Heart left ventricle (tissue), 16 donors: ENCODE measurements at regions of chr7 and their contacts with region 1.

Region 1: GRCh38 chr7:24665564-24666294 is 91.5 kb downstream of the GSDME start:
- DNase-seq: no peak
- ATAC-seq: no peak
- H3K4me3 ChIP-seq: no peak overlapping the region
- H3K27ac ChIP-seq: no peak overlapping the region
- H3K4me1 ChIP-seq: peaks cover 0 to 15% (median 0%) of the 10 kb centered on the region in 12 donors
- H3K27me3 ChIP-seq: no peaks in the 10 kb centered on the region
- CTCF ChIP-seq: peak; percentile 42 to 75 (median 61)
- POLR2A ChIP-seq: no peak

Region 2: DNA sequence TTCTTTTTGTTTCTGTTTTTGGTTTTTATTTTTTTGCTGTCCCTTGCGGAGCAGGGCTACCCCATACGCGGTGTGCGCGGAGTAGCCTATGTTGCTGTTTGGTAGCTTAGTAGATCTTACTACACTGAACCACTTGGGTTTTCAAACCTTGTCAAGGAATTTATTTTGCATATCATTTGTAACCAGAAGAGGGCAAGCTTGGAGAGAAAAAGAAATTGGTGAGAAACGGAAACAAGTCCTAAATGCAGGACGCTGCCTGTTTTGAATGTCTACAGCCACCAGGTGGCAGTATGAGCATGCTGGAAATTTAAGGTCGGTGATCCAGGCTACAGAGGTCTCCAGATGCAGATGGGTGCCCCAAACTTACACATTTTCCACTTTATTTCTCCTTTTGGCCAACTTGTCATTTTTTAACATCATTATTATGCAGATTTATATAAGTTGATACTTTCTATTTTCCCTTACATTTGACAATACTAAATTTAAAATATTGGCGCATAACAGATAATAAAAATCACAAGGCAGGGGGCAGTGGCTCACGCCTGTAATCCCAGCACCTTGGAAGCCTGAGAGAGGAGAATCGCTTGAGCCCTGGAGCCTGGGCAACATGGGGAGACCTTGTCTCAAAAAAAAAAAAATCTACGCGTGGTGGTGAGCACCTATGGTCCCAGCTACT is 1118.7 kb before region 1 on chr7:
- intact Hi-C with region 1: loop called in 1 of 10 experiments (anchors 10 kb)
- DNase-seq: peak in 4 of 5 donors; percentile 45 to 65 (median 60)
- ATAC-seq: peak in 3 of 4 donors; percentile 79 to 86 (median 83)
- H3K4me3 ChIP-seq: no peak overlapping the region
- H3K27ac ChIP-seq: no peak overlapping the region
- H3K4me1 ChIP-seq: no peaks in the 10 kb centered on the region
- H3K27me3 ChIP-seq: no peaks in the 10 kb centered on the region
- CTCF ChIP-seq: peak; percentile 89 to 97 (median 94)
- POLR2A ChIP-seq: no peak

Region 3: GRCh38 chr7:23570592-23571200 is 1095.0 kb before region 1 on chr7:
- intact Hi-C with region 1: loop called in 4 of 10 experiments (anchors 5 to 10 kb)
- DNase-seq: peak; percentile 48 to 74 (median 68)
- ATAC-seq: peak; percentile 67 to 96 (median 91)
- H3K4me3 ChIP-seq: no peak overlapping the region
- H3K27ac ChIP-seq: no peak overlapping the region
- H3K4me1 ChIP-seq: peaks cover 0 to 3% (median 0%) of the 10 kb centered on the region in 12 donors
- H3K27me3 ChIP-seq: peaks cover 0 to 17% (median 0%) of the 10 kb centered on the region in 9 donors
- CTCF ChIP-seq: peak; percentile 66 to 90 (median 84)
- POLR2A ChIP-seq: no peak

Region 4: GRCh38 chr7:23938937-23939552 is 726.7 kb before region 1 on chr7:
- intact Hi-C with region 1: loop called in 1 of 10 experiments (anchors 10 kb)
- DNase-seq: no peak
- ATAC-seq: peak in 1 of 4 donors; percentile 53
- H3K4me3 ChIP-seq: no peak overlapping the region
- H3K27ac ChIP-seq: no peak overlapping the region
- H3K4me1 ChIP-seq: no peaks in the 10 kb centered on the region
- H3K27me3 ChIP-seq: peaks cover 0 to 8% (median 0%) of the 10 kb centered on the region in 9 donors
- CTCF ChIP-seq: peak in 2 of 12 donors; percentile 14 to 20
- POLR2A ChIP-seq: no peak

Region 5: GRCh38 chr7:24290004-24290641 is 375.6 kb before region 1 on chr7:
- intact Hi-C with region 1: loop called in 1 of 10 experiments (anchors 2 kb)
- DNase-seq: no peak
- ATAC-seq: peak in 3 of 4 donors; percentile 36 to 60 (median 42)
- H3K4me3 ChIP-seq: no peak overlapping the region
- H3K27ac ChIP-seq: no peak overlapping the region
- H3K4me1 ChIP-seq: peaks cover 0 to under 1% (median 0%) of the 10 kb centered on the region in 12 donors
- H3K27me3 ChIP-seq: peaks cover 1 to 54% (median 13%) of the 10 kb centered on the region in 9 donors
- CTCF ChIP-seq: peak in 4 of 12 donors; percentile 8 to 37 (median 26)
- POLR2A ChIP-seq: no peak

Region 6: GRCh38 chr7:24401628-24402593 is 263.8 kb before region 1 on chr7:
- intact Hi-C with region 1: loop called in 7 of 10 experiments (anchors 5 to 10 kb)
- DNase-seq: no peak
- ATAC-seq: no peak
- H3K4me3 ChIP-seq: peak overlapping the region in 1 of 12 donors; percentile 1
- H3K27ac ChIP-seq: no peak overlapping the region
- H3K4me1 ChIP-seq: no peaks in the 10 kb centered on the region
- H3K27me3 ChIP-seq: peaks cover 0 to 3% (median 0%) of the 10 kb centered on the region in 9 donors
- CTCF ChIP-seq: peak in 10 of 12 donors; percentile 17 to 53 (median 34)
- POLR2A ChIP-seq: no peak

Region 7: DNA sequence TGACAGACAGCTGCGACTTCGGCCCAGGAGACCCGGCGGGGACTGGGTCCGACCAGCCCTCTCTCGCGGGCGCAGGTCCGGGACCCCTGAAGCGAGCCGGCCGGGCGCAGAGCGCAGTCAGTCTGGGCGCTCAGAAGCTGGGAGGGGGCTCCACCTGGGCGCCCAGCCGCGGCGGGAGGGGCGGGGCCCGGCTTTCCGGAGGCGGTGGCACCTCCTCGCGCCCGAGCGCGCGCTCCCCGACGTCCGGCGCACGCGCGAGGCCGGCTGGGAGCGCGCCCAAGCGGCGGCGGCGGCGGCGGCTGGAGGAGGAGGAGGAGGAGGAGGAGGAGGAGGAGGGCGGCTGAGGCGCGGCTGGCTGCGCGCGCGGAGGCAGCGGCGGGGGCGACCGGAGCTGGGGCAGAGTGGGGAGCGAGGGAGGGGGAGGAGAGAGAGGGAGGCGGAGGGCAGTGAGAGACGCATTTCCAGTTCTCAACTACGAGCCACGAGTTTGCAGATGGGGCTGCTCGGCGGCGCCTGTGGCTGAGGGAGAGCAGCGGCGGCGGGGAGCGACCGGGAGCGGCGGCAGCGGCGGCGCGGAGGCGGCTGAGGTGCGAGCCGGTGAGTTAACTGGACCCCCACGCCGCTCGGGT is 92.6 kb before region 1 on chr7 and contains the start of gene PALS2:
- intact Hi-C with region 1: loop called in 3 of 10 experiments (anchors 10 kb)
- DNase-seq: peak; percentile 62 to 85 (median 65)
- ATAC-seq: peak; percentile 30 to 94 (median 88)
- H3K4me3 ChIP-seq: peak within 1 kb of the TSS; percentile 58 to 90 (median 70)
- H3K27ac ChIP-seq: peak within 1 kb of the TSS in 8 of 12 donors; percentile 27 to 80 (median 62)
- H3K4me1 ChIP-seq: peaks cover 0 to 20% (median 9%) of the 10 kb centered on the region in 12 donors
- H3K27me3 ChIP-seq: peaks cover 0 to 12% (median 0%) of the 10 kb centered on the region in 9 donors
- CTCF ChIP-seq: no peak
- POLR2A ChIP-seq: no peak
- total RNA-seq, gene PALS2: 1.7 to 12.8 (median 5.6) TPM